ENCODE measurements at regions of chr6 and their contacts with region 1.

Region 1: GRCh38 chr6:106339334-106340029 is 13.9 kb upstream of the ATG5 start:
- DNase-seq: peak; percentile 57
- ATAC-seq: peak; percentile 97
- H3K4me3 ChIP-seq: peak overlapping the region in 1 of 2 experiments; percentile 13; a peak in 1 of 4 replicates
- H3K27ac ChIP-seq: no peak overlapping the region
- H3K4me1 ChIP-seq: peaks cover 4 to 13% of the 10 kb centered on the region in 2 experiments; a peak in 2 of 4 replicates
- H3K27me3 ChIP-seq: no peaks in the 10 kb centered on the region
- CTCF ChIP-seq: peak; percentile 82 to 87 (median 84); a peak in 5 of 6 replicates
- POLR2A ChIP-seq: no peak
- RAD21 ChIP-seq: peak; percentile 87

Region 2: DNA sequence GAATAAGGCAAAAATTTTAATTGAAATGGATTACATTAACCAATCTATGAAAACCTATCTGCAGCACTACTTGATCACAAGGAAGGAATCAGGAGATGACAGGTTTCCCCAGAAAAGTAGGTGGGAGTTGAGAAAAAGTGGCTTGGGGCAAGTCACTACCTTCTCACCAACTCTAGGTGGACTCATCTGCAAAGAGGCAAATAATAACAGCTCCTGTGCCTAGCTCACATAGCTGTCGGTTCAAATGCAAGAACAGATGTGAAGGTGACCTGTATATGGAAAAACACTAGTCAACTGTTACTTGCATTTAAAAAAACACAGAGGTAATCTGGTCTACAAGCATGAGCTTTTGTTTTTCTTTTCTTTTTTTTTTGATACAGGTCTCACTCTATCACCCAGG is 1226.9 kb before region 1 on chr6:
- CTCF ChIA-PET with region 1: no interaction called
- POLR2A ChIA-PET with region 1: no interaction called
- RAD21 ChIA-PET with region 1: no interaction called
- intact Hi-C with region 1: no loop called
- DNase-seq: no peak
- ATAC-seq: peak; percentile 54
- H3K4me3 ChIP-seq: no peak overlapping the region
- H3K27ac ChIP-seq: no peak overlapping the region
- H3K4me1 ChIP-seq: no peaks in the 10 kb centered on the region
- H3K27me3 ChIP-seq: no peaks in the 10 kb centered on the region
- CTCF ChIP-seq: 0 out of 6 replicates have a peak, but pooled peaks of 1 of the 3 experiments have one; percentile 7
- POLR2A ChIP-seq: no peak
- RAD21 ChIP-seq: peak; percentile 43

Region 3: DNA sequence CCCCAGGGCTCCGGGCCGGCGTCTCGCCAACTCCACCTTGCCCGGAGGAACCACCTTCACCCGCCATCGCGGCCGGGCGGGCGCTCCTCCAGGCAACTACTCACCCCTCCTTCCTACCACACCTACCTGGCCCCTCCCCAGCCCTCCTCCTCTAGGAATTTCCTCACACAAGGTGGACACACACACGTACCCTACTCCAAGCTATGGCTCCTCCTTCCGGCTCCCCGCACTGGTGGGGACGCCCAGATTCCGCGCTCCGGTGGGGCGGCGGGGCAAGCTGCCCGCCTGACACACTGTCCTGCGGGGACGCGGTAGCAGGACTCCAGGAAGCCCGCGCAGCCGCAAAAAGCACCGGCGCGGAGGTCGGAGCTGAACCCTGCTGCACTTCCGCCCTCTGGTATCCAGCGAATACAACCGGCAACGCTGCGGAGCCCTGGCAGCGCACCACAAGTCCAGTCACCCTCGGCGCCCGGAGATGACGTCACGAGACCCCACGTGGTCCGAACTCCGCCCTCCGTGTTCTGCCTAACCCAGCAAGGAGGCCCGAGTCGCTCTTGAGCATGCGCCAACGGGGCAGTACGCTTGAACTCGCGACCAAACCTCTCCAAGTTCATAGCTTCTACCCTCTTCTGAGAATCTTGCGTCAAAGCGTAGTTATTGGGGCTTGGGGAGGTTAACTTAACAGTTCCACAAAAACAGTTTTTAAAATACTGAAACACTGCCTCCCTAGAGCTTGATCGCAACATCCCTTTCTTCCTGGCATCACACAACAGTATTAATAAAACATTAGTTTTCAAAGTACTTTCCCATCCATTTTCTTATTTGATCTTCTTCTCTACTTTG is 13.9 kb before region 1 on chr6 and contains the start of gene ATG5:
- CTCF ChIA-PET with region 1: interaction called, 13 read pairs
- POLR2A ChIA-PET with region 1: interaction called, 6 read pairs
- RAD21 ChIA-PET with region 1: no interaction called
- intact Hi-C with region 1: no loop called
- DNase-seq: peak; percentile 98
- ATAC-seq: peak; percentile 93
- H3K4me3 ChIP-seq: peak within 1 kb of the TSS; percentile 78 to 85
- H3K27ac ChIP-seq: peak within 1 kb of the TSS; percentile 91
- H3K4me1 ChIP-seq: peaks cover 6 to 16% of the 10 kb centered on the region in 2 experiments; a peak in 3 of 4 replicates
- H3K27me3 ChIP-seq: no peaks in the 10 kb centered on the region
- CTCF ChIP-seq: no peak
- POLR2A ChIP-seq: peak; percentile 65
- RAD21 ChIP-seq: no peak
- total RNA-seq, gene ATG5: 39.6 TPM

Region 4: GRCh38 chr6:106372838-106373501 is 33.5 kb after region 1 on chr6:
- CTCF ChIA-PET with region 1: interaction called, 11 read pairs
- POLR2A ChIA-PET with region 1: no interaction called
- RAD21 ChIA-PET with region 1: no interaction called
- intact Hi-C with region 1: no loop called
- DNase-seq: peak; percentile 79
- ATAC-seq: peak; percentile 71
- H3K4me3 ChIP-seq: peak overlapping the region in 1 of 2 experiments; percentile 35; a peak in 2 of 4 replicates
- H3K27ac ChIP-seq: no peak overlapping the region
- H3K4me1 ChIP-seq: peaks cover 10 to 59% of the 10 kb centered on the region in 2 experiments
- H3K27me3 ChIP-seq: no peaks in the 10 kb centered on the region
- CTCF ChIP-seq: no peak
- POLR2A ChIP-seq: no peak
- RAD21 ChIP-seq: peak; percentile 17; the same call in 1 of the 2 replicates

Region 5: GRCh38 chr6:106556368-106556960 is 217.0 kb after region 1 on chr6:
- CTCF ChIA-PET with region 1: interaction called, 13 read pairs
- POLR2A ChIA-PET with region 1: no interaction called
- RAD21 ChIA-PET with region 1: interaction called in 1 of 2 experiments, 3 read pairs
- intact Hi-C with region 1: no loop called
- DNase-seq: no peak
- ATAC-seq: no peak
- H3K4me3 ChIP-seq: no peak overlapping the region
- H3K27ac ChIP-seq: no peak overlapping the region
- H3K4me1 ChIP-seq: peaks cover 27 to 38% of the 10 kb centered on the region in 2 experiments
- H3K27me3 ChIP-seq: no peaks in the 10 kb centered on the region
- CTCF ChIP-seq: peak; percentile 27 to 70 (median 51)
- POLR2A ChIP-seq: no peak
- RAD21 ChIP-seq: peak; percentile 72

Region 6: GRCh38 chr6:106979427-106979884 is 640.0 kb after region 1 on chr6:
- CTCF ChIA-PET with region 1: interaction called, 21 read pairs
- POLR2A ChIA-PET with region 1: no interaction called
- RAD21 ChIA-PET with region 1: no interaction called
- intact Hi-C with region 1: loop called (anchors 2 kb)
- DNase-seq: peak; percentile 71
- ATAC-seq: peak; percentile 62
- H3K4me3 ChIP-seq: no peak overlapping the region
- H3K27ac ChIP-seq: no peak overlapping the region
- H3K4me1 ChIP-seq: peaks cover 5 to 15% of the 10 kb centered on the region in 2 experiments; a peak in 3 of 4 replicates
- H3K27me3 ChIP-seq: no peaks in the 10 kb centered on the region
- CTCF ChIP-seq: peak; percentile 92 to 99 (median 96)
- POLR2A ChIP-seq: no peak
- RAD21 ChIP-seq: peak; percentile 97